Left ventricle myocardium superior (tissue), 1 donor: ENCODE measurements at regions of chr18 and their contacts with region 1.

Region 1: DNA sequence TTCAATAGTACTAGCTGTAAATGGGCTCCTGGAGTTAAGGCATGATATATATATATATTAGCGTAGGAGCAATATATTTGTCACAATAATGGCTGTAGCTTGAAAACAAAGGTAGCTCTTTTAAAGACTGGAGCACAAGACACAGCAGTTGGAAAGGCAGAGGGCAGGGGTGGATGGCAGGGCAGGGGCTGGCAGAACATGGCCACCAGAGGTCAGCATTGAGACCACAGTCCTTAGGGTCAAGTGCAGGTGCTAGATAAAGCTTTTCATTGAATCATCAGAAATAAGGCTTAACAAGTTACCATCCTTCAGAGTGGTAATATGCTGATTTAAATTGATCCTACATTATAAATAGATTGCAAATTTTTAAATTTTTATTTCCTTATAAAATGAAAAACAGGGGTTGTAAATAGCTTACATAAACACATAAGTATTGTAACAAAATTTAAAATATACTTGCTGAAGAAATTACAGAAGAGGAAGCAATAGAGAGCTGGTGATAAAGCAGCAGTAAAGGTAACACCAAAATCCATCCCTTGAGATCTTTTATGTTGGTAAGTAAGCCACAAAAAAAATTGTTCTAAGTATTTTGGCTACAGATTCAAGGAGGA is 161.2 kb upstream of the PIEZO2 start:
- DNase-seq: peak; percentile 55
- ATAC-seq: peak; percentile 75

Region 2: DNA sequence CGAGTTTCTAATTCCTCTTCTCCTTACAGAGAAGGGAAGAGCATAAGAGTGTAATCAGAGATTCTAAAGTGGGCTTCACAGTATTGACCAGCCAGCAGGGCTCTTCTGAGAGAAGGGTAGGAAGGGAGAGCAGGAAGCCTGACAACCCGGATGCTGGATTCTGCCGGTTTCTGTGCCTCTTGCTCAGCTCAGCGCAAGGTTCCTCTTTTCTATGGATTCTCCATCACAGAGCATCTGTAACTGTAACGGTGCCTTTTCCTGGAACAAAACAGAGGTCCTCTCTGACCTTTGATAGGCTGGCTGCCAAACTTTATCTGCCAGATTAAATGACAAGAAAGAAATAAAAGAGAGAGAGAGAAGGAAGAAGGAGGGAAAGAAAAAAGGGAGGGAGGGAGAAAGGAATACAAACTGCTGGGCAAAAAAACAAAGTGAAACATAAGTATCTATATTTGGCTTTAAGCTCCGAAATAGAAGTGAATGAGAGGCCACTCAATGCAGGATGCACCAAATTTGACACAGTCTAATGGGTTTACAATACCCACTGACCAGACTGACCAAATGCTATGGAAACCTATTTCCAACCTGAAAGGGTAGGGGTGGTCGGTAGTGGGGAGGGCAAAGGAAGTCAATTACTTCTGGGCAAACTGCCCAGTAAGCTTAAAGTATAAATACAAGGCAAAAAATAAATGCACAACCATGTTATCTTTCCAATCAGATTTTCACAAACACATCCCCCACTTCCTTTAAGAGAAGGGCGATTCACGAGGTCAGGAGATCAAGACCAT is 220.5 kb before region 1 on chr18:
- intact Hi-C with region 1: no loop called
- DNase-seq: no peak
- ATAC-seq: no peak

Region 3: DNA sequence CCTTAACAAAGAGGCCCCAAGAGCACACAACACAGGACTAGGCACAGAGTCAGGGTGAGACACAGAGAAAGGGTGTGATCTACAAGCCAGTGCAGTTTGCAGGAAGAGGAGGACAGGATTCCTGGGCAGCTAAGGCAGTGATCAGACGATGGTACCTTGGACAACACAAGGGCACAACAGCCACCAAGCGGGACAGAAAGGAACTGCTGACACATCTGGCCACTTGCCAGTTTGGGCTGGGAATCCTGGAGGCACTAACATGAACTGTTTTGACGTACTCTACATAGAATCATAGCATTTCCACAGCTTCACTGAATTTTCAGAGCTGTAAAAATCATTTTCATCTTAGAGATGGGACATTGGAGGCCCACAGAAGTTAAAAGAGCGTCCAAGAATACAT is 77.3 kb after region 1 on chr18:
- intact Hi-C with region 1: loop called (anchors 10 kb)
- DNase-seq: peak; percentile 77
- ATAC-seq: peak; percentile 79

Region 4: GRCh38 chr18:11872479-11873136 is 562.0 kb after region 1 on chr18:
- intact Hi-C with region 1: no loop called
- DNase-seq: peak; percentile 41
- ATAC-seq: peak; percentile 97